ENCODE measurements at regions of chr11 and their contacts with region 1.

Region 1: GRCh38 chr11:86515297-86516094 is 140.8 kb downstream of the CCDC81 start:
- DNase-seq: no peak
- H3K4me3 ChIP-seq: no peak overlapping the region
- H3K27ac ChIP-seq: no peak overlapping the region
- H3K4me1 ChIP-seq: no peaks in the 10 kb centered on the region
- H3K27me3 ChIP-seq: no peaks in the 10 kb centered on the region
- CTCF ChIP-seq: no peak
- POLR2A ChIP-seq: no peak

Region 2: GRCh38 chr11:86408845-86409244 is 106.7 kb before region 1 on chr11:
- intact Hi-C with region 1: no loop called
- DNase-seq: no peak
- H3K4me3 ChIP-seq: no peak overlapping the region
- H3K27ac ChIP-seq: no peak overlapping the region
- H3K4me1 ChIP-seq: no peaks in the 10 kb centered on the region
- H3K27me3 ChIP-seq: no peaks in the 10 kb centered on the region
- CTCF ChIP-seq: no peak
- POLR2A ChIP-seq: no peak

Region 3: DNA sequence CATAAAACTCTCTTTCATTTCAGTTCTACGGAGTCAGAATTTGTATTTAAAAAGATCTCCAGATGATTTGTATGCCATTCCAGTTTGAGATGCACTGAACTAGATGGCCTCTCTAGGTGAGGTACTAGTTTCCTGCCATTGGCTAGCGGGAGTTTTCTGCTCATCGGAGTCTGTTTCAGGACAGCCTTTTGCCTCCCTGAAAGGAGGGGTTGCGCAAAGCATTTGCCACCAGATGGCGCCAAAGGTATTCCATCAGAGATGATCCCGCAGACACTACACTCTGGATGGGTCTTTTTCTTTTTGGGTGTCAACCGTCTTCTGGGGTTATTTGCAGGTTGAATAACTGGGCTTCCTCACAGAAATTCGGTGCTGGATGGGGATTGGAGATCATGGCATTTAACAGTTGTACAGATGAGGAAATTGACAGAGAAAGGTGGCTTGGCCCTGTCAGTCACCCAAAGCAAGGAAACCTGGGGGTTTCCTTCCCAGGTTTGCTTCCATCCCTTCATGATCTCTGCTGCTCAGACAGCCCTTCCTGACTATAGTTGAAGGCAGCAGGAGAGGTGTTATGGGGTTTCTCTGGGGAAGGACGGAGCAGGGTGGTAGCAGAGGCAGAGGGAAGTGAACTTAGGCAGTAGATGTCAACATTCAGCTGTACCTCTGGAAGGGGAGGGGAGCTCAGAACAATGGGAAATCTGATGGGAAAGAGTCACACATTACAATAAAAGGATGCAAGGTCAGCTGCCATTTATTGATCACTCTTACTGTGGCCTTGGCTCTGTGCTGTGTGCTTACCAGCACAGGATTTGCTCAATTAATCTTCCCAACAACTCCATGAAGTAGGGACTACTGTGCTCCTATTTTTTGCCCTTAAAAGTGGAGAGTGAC is 59.2 kb before region 1 on chr11:
- intact Hi-C with region 1: no loop called
- DNase-seq: peak; percentile 87
- H3K4me3 ChIP-seq: no peak overlapping the region
- H3K27ac ChIP-seq: peak overlapping the region in 1 of 2 donors; percentile 37
- H3K4me1 ChIP-seq: no peaks in the 10 kb centered on the region
- H3K27me3 ChIP-seq: no peaks in the 10 kb centered on the region
- CTCF ChIP-seq: peak; percentile 70 to 92 (median 86)
- POLR2A ChIP-seq: no peak

Region 4: DNA sequence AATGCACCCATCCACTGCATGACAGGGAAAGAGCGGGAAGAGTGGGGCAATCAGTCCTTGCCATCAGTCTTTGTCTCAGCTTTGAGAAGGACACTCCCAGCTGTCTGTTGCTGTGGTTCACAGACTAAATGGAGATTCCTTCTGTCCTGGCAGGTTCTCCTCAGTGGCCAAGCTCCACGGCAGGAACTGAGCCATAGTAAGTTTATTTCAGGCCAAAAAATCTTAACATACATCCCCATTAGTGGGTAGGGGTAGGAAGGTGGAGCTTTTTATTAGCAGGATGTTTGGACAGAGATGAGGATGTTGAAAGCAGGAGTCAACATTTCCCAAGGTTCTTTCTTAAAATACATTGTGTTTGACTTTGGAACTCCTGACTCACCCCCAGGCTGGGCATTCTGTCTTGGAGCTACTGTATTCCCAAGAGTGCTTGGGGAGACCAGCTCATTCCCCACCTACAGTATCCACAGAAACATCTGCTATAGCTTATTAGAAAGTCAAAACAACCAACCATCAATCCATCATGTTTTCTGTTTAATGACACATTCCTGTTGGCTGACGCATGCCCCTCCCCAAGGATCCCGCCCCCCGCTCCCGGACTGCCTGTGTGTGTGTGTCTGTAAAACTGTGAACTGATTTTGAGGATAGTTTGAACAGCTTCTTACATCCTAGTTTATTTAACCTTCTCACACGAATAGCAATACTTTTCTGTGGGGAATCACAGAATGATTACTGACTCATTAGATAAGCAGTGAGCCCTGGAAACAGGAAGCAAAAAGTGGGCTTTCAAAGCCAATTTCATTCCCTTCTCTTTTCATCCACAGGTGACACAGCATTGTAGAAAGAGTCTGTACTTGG is 31.3 kb before region 1 on chr11:
- intact Hi-C with region 1: loop called (anchors 5 kb)
- DNase-seq: no peak
- H3K4me3 ChIP-seq: no peak overlapping the region
- H3K27ac ChIP-seq: no peak overlapping the region
- H3K4me1 ChIP-seq: no peaks in the 10 kb centered on the region
- H3K27me3 ChIP-seq: no peaks in the 10 kb centered on the region
- CTCF ChIP-seq: no peak
- POLR2A ChIP-seq: no peak